MCF 10A (cell line): ENCODE measurements at regions of chr10 and their contacts with region 1.

Region 1: GRCh38 chr10:1978593-1978992 is 241.3 kb upstream of the ADARB2 start:
- DNase-seq: peak; percentile 91
- H3K4me3 Mint-ChIP-seq: no peak overlapping the region
- H3K27ac Mint-ChIP-seq: peak overlapping the region; percentile 80
- H3K4me1 Mint-ChIP-seq: peaks cover 13% of the 10 kb centered on the region
- H3K27me3 Mint-ChIP-seq: no peaks in the 10 kb centered on the region
- CTCF ChIP-seq: no peak

Region 2: GRCh38 chr10:1903982-1904381 is 74.6 kb before region 1 on chr10:
- CTCF ChIA-PET with region 1: no interaction called
- POLR2A ChIA-PET with region 1: no interaction called
- intact Hi-C with region 1: no loop called
- DNase-seq: no peak
- H3K4me3 Mint-ChIP-seq: no peak overlapping the region
- H3K27ac Mint-ChIP-seq: no peak overlapping the region
- H3K4me1 Mint-ChIP-seq: no peaks in the 10 kb centered on the region
- H3K27me3 Mint-ChIP-seq: no peaks in the 10 kb centered on the region
- CTCF ChIP-seq: no peak

Region 3: DNA sequence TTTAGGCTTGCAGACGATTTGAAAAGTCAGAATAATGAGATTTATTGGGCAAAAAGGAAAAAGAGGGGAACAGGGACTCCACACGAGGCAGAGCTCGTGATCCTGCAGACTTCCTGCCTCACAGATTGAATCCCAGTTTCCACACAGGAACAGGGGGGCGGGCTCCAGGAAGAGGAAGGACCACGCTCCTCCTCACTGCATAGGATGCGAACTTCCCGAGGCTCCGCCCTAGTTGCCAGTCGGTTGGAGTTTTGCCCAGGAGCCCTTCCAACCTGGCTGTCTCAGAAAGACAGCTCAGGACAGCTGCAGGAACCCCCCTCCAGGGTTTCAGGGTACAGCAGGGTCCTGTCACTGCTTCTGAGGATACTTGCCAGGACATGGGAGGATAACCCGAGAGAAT is 247.0 kb after region 1 on chr10:
- CTCF ChIA-PET with region 1: no interaction called
- POLR2A ChIA-PET with region 1: no interaction called
- intact Hi-C with region 1: loop called (anchors 10 kb)
- DNase-seq: no peak
- H3K4me3 Mint-ChIP-seq: no peak overlapping the region
- H3K27ac Mint-ChIP-seq: no peak overlapping the region
- H3K4me1 Mint-ChIP-seq: peaks cover 16% of the 10 kb centered on the region
- H3K27me3 Mint-ChIP-seq: no peaks in the 10 kb centered on the region
- CTCF ChIP-seq: no peak